Activated naive CD4-positive, alpha-beta T cell treated with anti-CD3 and anti-CD28 coated beads for 36 hours (primary cell): ENCODE measurements at regions of chr6 and their contacts with region 1.

Region 1: GRCh38 chr6:112018619-112019416 is 35.1 kb upstream of the CCN6 start:
- DNase-seq: no peak
- H3K4me3 Mint-ChIP-seq: no peak overlapping the region
- H3K27ac Mint-ChIP-seq: no peak overlapping the region
- H3K4me1 Mint-ChIP-seq: peaks cover 67% of the 10 kb centered on the region
- H3K27me3 Mint-ChIP-seq: no peaks in the 10 kb centered on the region

Region 2: GRCh38 chr6:112029045-112029822 is 10.4 kb after region 1 on chr6:
- CTCF ChIA-PET with region 1: interaction called, 56 read pairs
- intact Hi-C with region 1: loop called (anchors 1 kb)
- DNase-seq: peak; percentile 91
- H3K4me3 Mint-ChIP-seq: no peak overlapping the region
- H3K27ac Mint-ChIP-seq: peak overlapping the region; percentile 90
- H3K4me1 Mint-ChIP-seq: peaks cover 81% of the 10 kb centered on the region
- H3K27me3 Mint-ChIP-seq: no peaks in the 10 kb centered on the region

Region 3: DNA sequence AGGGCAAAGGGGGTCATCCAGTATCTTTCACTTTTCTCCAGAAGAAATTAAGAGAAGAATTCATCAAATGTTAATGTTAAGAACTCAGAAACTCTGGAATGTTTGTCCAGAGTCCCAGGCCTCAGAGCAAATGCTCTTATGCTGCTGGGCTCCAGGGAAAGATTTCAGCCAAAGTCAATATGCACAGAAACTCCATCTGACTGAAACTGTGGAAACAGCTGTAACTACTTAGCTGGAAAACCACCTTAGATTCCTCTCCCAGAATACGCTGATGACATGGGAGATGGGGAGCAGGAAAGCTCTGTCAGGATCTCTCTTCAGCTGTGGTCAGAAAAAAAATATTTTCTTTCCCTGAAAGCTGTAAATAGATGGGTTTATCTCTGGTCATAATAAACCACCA is 887.9 kb after region 1 on chr6:
- CTCF ChIA-PET with region 1: no interaction called
- intact Hi-C with region 1: no loop called
- DNase-seq: no peak
- H3K4me3 Mint-ChIP-seq: no peak overlapping the region
- H3K27ac Mint-ChIP-seq: no peak overlapping the region
- H3K4me1 Mint-ChIP-seq: no peaks in the 10 kb centered on the region
- H3K27me3 Mint-ChIP-seq: no peaks in the 10 kb centered on the region